Right ventricle myocardium superior (tissue), 1 donor: ENCODE measurements at regions of chr16 and their contacts with region 1.

Region 1: DNA sequence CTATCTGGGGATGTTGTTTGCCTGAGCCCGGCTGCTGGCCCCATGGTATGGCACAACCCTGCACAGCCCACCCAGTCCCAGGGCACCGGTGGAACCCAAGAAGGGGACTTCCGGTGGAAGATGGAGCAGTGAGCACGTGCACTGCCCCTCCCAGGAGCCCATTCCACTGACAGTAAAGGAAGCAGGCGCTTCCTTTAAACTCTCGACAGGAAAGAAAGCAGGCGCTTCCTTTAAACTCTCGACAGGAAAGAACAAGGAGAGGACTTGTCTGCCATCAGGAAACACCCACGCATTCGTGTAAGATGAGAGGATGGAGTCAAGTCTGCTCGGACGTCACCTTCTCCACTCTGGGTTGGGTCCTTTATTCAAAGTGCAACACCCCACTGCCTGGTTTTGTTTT is 53.7 kb downstream of the IL21R start:
- DNase-seq: peak; percentile 37
- ATAC-seq: no peak

Region 2: DNA sequence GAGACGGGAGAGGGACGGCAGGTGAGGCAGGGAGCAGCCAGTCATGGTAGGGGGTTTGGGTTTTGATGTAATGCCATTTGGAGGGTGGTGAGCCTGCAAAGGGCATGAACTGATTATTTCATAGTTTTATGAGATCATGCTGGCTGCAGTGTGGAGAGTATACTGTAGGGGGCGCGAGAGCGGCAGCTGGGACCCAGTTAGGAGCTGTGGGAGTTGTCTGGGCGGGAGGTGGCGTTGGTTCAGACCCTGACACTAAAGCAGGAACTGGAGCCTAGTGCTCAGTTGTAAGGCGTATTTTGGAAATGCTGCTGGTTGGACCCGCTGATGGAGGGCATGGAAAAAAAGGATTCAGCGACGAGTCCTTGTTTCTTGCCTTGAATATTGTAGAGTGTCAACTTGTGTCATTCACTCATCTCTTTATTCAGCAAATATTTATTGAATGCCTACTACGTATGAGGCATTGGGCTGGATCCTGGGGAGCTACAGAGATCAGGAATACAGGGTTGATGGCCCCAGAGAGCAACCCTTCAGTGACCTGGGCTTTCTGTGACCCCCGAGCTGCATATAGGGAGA is 276.1 kb before region 1 on chr16:
- intact Hi-C with region 1: loop called (anchors 2 kb)
- DNase-seq: peak; percentile 93
- ATAC-seq: peak; percentile 99

Region 3: GRCh38 chr16:27285676-27286196 is 170.0 kb before region 1 on chr16:
- intact Hi-C with region 1: no loop called
- DNase-seq: no peak
- ATAC-seq: peak; percentile 73